Activated naive CD4-positive, alpha-beta T cell treated with anti-CD3 and anti-CD28 coated beads for 36 hours (primary cell): ENCODE measurements at regions of chr5 and their contacts with region 1.

Region 1: GRCh38 chr5:55650386-55650785 is 61.7 kb downstream of the SLC38A9 start:
- DNase-seq: peak; percentile 16
- H3K4me3 Mint-ChIP-seq: no peak overlapping the region
- H3K27ac Mint-ChIP-seq: no peak overlapping the region
- H3K4me1 Mint-ChIP-seq: peaks cover 24% of the 10 kb centered on the region
- H3K27me3 Mint-ChIP-seq: no peaks in the 10 kb centered on the region

Region 2: GRCh38 chr5:55582256-55582655 is 68.1 kb before region 1 on chr5:
- CTCF ChIA-PET with region 1: no interaction called
- intact Hi-C with region 1: loop called (anchors 5 kb)
- DNase-seq: peak; percentile 50
- H3K4me3 Mint-ChIP-seq: no peak overlapping the region
- H3K27ac Mint-ChIP-seq: no peak overlapping the region
- H3K4me1 Mint-ChIP-seq: peaks cover 12% of the 10 kb centered on the region
- H3K27me3 Mint-ChIP-seq: no peaks in the 10 kb centered on the region